Dendritic cell treated with granulocyte-macrophage colony-stimulating factor and Interleukin-4, amounts not matched to agents 40 ng/mL and 50 ng/mL, for 4 days (primary cell): ENCODE measurements at regions of chr11 and their contacts with region 1.

Region 1: GRCh38 chr11:118907051-118908042 is 18.4 kb downstream of the BCL9L start:
- H3K4me3 Mint-ChIP-seq: no peak overlapping the region
- H3K27ac Mint-ChIP-seq: no peak overlapping the region
- H3K4me1 Mint-ChIP-seq: peaks cover 31% of the 10 kb centered on the region
- H3K27me3 Mint-ChIP-seq: peaks cover 28% of the 10 kb centered on the region

Region 2: GRCh38 chr11:118820412-118821357 is 86.7 kb before region 1 on chr11:
- intact Hi-C with region 1: no loop called
- H3K4me3 Mint-ChIP-seq: no peak overlapping the region
- H3K27ac Mint-ChIP-seq: no peak overlapping the region
- H3K4me1 Mint-ChIP-seq: peaks cover 9% of the 10 kb centered on the region
- H3K27me3 Mint-ChIP-seq: peaks cover 2% of the 10 kb centered on the region

Region 3: GRCh38 chr11:118883368-118884071 is 23.8 kb before region 1 on chr11 and contains the start of gene CXCR5:
- intact Hi-C with region 1: no loop called
- H3K4me3 Mint-ChIP-seq: no peak within 1 kb of the TSS
- H3K27ac Mint-ChIP-seq: no peak within 1 kb of the TSS
- H3K4me1 Mint-ChIP-seq: peaks cover 46% of the 10 kb centered on the region
- H3K27me3 Mint-ChIP-seq: peaks cover 35% of the 10 kb centered on the region

Region 4: GRCh38 chr11:118928108-118928870 is 20.9 kb after region 1 on chr11:
- intact Hi-C with region 1: loop called (anchors 1 kb)
- H3K4me3 Mint-ChIP-seq: peak overlapping the region; percentile 80
- H3K27ac Mint-ChIP-seq: peak overlapping the region; percentile 66
- H3K4me1 Mint-ChIP-seq: peaks cover 77% of the 10 kb centered on the region
- H3K27me3 Mint-ChIP-seq: peaks cover 14% of the 10 kb centered on the region

Region 5: GRCh38 chr11:118956094-118956846 is 48.9 kb after region 1 on chr11 and contains the start of gene UPK2:
- intact Hi-C with region 1: loop called (anchors 1 kb)
- H3K4me3 Mint-ChIP-seq: no peak within 1 kb of the TSS
- H3K27ac Mint-ChIP-seq: no peak within 1 kb of the TSS
- H3K4me1 Mint-ChIP-seq: no peaks in the 10 kb centered on the region
- H3K27me3 Mint-ChIP-seq: peaks cover 41% of the 10 kb centered on the region

Region 6: GRCh38 chr11:118973962-118974361 is 66.6 kb after region 1 on chr11:
- intact Hi-C with region 1: no loop called
- H3K4me3 Mint-ChIP-seq: no peak overlapping the region
- H3K27ac Mint-ChIP-seq: no peak overlapping the region
- H3K4me1 Mint-ChIP-seq: peaks cover 2% of the 10 kb centered on the region
- H3K27me3 Mint-ChIP-seq: peaks cover 33% of the 10 kb centered on the region

Region 7: DNA sequence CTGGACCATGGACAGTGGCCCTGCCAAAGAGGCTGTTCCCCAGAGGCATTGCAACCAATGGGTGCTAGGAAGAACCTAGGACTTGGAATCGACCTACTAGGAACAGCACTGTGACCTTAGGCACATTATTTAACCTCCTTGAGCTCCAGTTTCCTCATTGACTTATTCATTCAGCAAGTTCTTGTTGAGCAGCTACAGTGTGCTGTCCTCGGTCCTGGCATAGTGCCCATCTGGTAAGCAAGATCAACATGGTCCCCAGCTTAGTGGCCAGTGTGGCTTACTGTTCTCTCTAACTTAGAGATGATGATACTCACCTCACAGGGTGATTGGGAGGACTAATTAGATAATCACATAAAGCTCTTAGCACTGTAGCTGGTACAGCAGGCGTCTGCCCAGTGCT is 249.7 kb after region 1 on chr11:
- intact Hi-C with region 1: no loop called
- H3K4me3 Mint-ChIP-seq: no peak overlapping the region
- H3K27ac Mint-ChIP-seq: no peak overlapping the region
- H3K4me1 Mint-ChIP-seq: peaks cover 8% of the 10 kb centered on the region
- H3K27me3 Mint-ChIP-seq: peaks cover 46% of the 10 kb centered on the region